ENCODE measurements at regions of chr10 and their contacts with region 1.

Region 1: DNA sequence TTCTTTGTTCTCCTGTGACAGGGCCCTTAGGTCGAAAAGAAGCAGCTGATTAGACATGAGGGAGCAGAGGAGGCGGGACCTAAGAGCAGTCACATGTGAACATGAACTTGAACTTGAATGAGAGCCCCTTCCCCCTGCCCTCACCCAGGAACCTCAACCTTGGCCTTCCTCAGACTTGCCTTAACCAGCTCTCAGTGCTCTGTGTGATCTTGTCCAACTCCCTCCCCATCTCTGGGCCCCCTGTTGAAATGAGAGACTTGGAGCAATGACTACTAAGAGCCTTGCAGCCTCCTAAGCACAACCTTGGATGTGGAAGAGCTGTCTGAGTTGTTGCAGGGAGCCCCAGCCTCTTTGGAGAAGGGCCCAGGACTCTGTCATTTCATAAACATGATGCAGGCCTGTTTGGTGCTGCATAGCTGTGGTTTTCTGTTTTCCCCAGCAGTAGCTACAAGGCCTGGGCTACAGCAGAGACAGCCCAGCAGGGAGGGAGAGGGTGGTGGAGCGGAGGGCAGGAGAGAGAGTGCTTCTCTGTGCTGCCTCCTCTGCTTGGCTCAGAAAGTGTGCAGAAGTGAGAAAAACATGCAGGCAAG is 123.9 kb upstream of the ZMIZ1 start:
- DNase-seq: peak; percentile 98
- ATAC-seq: peak; percentile 99
- H3K4me3 ChIP-seq: no peak overlapping the region
- H3K27ac ChIP-seq: peak overlapping the region; percentile 75; the same call in 1 of the 2 replicates
- H3K4me1 ChIP-seq: peaks cover 34% of the 10 kb centered on the region
- H3K27me3 ChIP-seq: peaks cover 3% of the 10 kb centered on the region; the same call in 1 of the 2 replicates
- CTCF ChIP-seq: peak; percentile 27
- POLR2A ChIP-seq: no peak
- RAD21 ChIP-seq: peak; percentile 46

Region 2: GRCh38 chr10:78664929-78665553 is 279.8 kb before region 1 on chr10:
- CTCF ChIA-PET with region 1: no interaction called
- POLR2A ChIA-PET with region 1: no interaction called
- dilution Hi-C with region 1: no loop called
- in situ Hi-C with region 1: no loop called
- intact Hi-C with region 1: loop called (anchors 10 kb)
- DNase-seq: peak; percentile 39
- ATAC-seq: peak; percentile 59; the same call in 1 of the 2 replicates
- H3K4me3 ChIP-seq: no peak overlapping the region
- H3K27ac ChIP-seq: no peak overlapping the region
- H3K4me1 ChIP-seq: no peaks in the 10 kb centered on the region
- H3K27me3 ChIP-seq: peaks cover 18% of the 10 kb centered on the region
- CTCF ChIP-seq: peak; percentile 45
- POLR2A ChIP-seq: no peak
- RAD21 ChIP-seq: peak; percentile 49